Endothelial cell of umbilical vein (primary cell): ENCODE measurements at regions of chr9 and their contacts with region 1.

Region 1: GRCh38 chr9:73067074-73067473 is 84.6 kb upstream of the ANXA1 start:
- DNase-seq: no peak
- H3K4me3 ChIP-seq: no peak overlapping the region
- H3K27ac ChIP-seq: no peak overlapping the region
- H3K4me1 ChIP-seq: no peaks in the 10 kb centered on the region
- H3K27me3 ChIP-seq: no peaks in the 10 kb centered on the region
- CTCF ChIP-seq: no peak
- POLR2A ChIP-seq: no peak

Region 2: DNA sequence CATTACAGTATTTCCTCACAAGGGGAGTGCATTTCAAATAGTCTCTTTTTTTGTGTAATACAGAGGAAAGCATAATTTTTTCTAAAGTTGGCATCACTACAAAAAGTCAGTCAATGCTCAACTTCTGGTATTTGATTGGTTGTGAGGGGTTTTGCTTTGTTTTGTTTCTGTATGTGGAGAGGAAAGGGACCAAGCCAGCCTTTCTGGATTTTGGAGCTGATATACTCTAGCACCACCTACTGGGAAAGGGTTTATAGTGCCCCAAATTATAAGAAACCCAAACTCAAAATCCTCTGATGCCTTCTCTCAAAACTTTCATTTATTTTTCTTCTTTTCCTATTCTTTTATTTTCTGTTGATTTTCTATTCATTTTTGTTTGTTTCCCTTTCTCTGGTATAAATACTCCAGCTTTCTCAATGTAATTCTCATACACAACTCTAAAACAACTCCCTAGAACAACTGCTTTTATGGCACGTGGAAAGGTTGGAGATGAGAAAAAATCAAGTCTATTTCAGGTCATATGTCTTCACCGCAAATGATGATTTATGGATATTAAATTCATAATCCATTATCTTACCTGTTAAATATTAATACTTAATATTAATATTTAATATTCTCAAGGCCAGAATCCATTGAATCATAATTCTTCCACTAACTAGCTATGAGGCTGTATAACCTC is 15.0 kb after region 1 on chr9:
- CTCF ChIA-PET with region 1: interaction called, 16 read pairs
- POLR2A ChIA-PET with region 1: no interaction called
- dilution Hi-C with region 1: no loop called
- intact Hi-C with region 1: no loop called
- DNase-seq: peak; percentile 90
- H3K4me3 ChIP-seq: no peak overlapping the region
- H3K27ac ChIP-seq: no peak overlapping the region
- H3K4me1 ChIP-seq: peaks cover 2% of the 10 kb centered on the region
- H3K27me3 ChIP-seq: no peaks in the 10 kb centered on the region
- CTCF ChIP-seq: peak; percentile 61 to 74
- POLR2A ChIP-seq: no peak